H1 (cell line): ENCODE measurements at regions of chr4 and their contacts with region 1.

Region 1: GRCh38 chr4:5804656-5805055 is 88.2 kb downstream of the CRMP1 start:
- DNase-seq: no peak
- H3K4me3 ChIP-seq: no peak overlapping the region
- H3K27ac ChIP-seq: no peak overlapping the region
- H3K4me1 ChIP-seq: no peaks in the 10 kb centered on the region
- H3K27me3 ChIP-seq: no peaks in the 10 kb centered on the region
- CTCF ChIP-seq: peak; percentile 41 to 62 (median 58)
- EP300 ChIP-seq: no peak
- POLR2A ChIP-seq: no peak
- RAD21 ChIP-seq: peak; percentile 25 to 42; a peak in 3 of 4 replicates

Region 2: DNA sequence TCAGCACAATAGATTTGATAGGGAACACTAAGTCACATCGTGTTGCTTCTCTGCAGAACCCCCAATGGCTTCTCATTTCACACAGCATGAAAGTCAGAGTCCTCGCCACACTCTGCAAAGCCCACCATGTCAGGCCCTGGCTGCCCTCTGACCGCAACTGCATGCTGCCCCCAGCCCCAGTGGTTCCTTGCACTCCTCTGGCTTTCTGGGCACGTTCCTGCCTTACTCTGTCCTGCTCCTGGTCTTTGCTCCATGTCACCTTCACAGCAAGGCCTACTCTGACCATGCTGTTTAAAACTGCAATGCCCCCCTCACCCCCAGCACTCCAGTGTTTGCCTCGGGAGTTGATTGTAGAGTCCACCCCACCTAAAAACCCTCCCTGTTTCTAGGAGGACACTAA is 15.5 kb before region 1 on chr4:
- CTCF ChIA-PET with region 1: interaction called, 14 read pairs
- POLR2A ChIA-PET with region 1: interaction called, 6 read pairs
- DNase-seq: peak in 1 of 2 experiments; percentile 31
- H3K4me3 ChIP-seq: no peak overlapping the region
- H3K27ac ChIP-seq: no peak overlapping the region
- H3K4me1 ChIP-seq: peaks cover 0 to 2% (median 1%) of the 10 kb centered on the region in 4 experiments; a peak in 1 of 7 replicates
- H3K27me3 ChIP-seq: no peaks in the 10 kb centered on the region
- CTCF ChIP-seq: no peak
- EP300 ChIP-seq: no peak
- POLR2A ChIP-seq: no peak
- RAD21 ChIP-seq: no peak

Region 3: DNA sequence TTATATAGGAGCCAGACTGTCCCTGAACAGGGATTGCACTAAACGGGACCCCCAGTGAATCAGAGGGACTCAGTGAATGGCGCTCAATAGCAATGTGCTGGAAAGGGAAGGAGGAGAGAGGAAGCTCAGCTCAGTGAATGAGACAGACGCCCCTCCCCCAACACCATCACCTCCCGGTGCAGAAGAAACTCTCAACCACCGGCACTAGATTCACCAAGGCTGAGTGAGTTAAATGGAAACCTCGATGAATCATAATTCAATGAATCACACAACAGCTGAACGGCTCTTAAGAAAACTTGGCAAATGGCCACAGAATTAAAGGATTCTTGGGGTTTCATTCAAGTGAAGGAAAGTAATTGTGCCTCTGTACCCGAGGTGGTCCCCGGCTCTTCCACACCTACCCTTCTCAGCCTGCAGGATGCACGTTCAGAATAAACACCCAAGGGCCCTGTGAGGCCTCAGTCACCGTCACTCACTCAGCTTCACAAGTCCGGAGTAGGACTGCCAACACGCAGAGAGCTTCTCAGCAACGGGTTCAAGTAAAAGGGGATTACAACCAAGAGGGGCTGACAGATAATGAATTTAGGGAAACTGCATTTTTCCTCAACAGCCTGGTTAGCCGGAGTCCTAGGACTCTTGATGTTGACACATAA is 58.9 kb after region 1 on chr4:
- CTCF ChIA-PET with region 1: no interaction called
- POLR2A ChIA-PET with region 1: no interaction called
- DNase-seq: no peak
- H3K4me3 ChIP-seq: no peak overlapping the region
- H3K27ac ChIP-seq: no peak overlapping the region
- H3K4me1 ChIP-seq: peaks cover 0 to 9% (median 3%) of the 10 kb centered on the region in 4 experiments; a peak in 3 of 7 replicates
- H3K27me3 ChIP-seq: no peaks in the 10 kb centered on the region
- CTCF ChIP-seq: no peak
- EP300 ChIP-seq: no peak
- POLR2A ChIP-seq: no peak
- RAD21 ChIP-seq: no peak